ENCODE measurements at regions of chr2 and their contacts with region 1.

Region 1: GRCh38 chr2:128232965-128233789 is 85.5 kb downstream of the HS6ST1 start:
- DNase-seq: peak; percentile 69 to 91 (median 83)
- ATAC-seq: peak; percentile 97
- H3K4me3 ChIP-seq: peak overlapping the region; percentile 61 to 77
- H3K4me3 Mint-ChIP-seq: peak overlapping the region; percentile 91
- H3K27ac ChIP-seq: peak overlapping the region in 1 of 2 experiments; percentile 42
- H3K27ac Mint-ChIP-seq: peak overlapping the region; percentile 69
- H3K4me1 ChIP-seq: peaks cover 10% of the 10 kb centered on the region
- H3K4me1 Mint-ChIP-seq: peaks cover 3% of the 10 kb centered on the region
- H3K27me3 ChIP-seq: peaks cover 0 to 8% of the 10 kb centered on the region in 2 experiments
- H3K27me3 Mint-ChIP-seq: peaks cover 6% of the 10 kb centered on the region
- CTCF ChIP-seq: peak; percentile 88

Region 2: GRCh38 chr2:127884436-127885345 is 348.5 kb before region 1 on chr2:
- CTCF ChIA-PET with region 1: no interaction called
- POLR2A ChIA-PET with region 1: no interaction called
- intact Hi-C with region 1: loop called (anchors 5 kb)
- DNase-seq: peak in 1 of 9 experiments; percentile 9
- ATAC-seq: no peak
- H3K4me3 ChIP-seq: peak overlapping the region; percentile 38
- H3K4me3 Mint-ChIP-seq: peak overlapping the region; percentile 86
- H3K27ac ChIP-seq: no peak overlapping the region
- H3K27ac Mint-ChIP-seq: peak overlapping the region; percentile 87
- H3K4me1 ChIP-seq: peaks cover 22% of the 10 kb centered on the region
- H3K4me1 Mint-ChIP-seq: peaks cover 66% of the 10 kb centered on the region
- H3K27me3 ChIP-seq: no peaks in the 10 kb centered on the region
- H3K27me3 Mint-ChIP-seq: no peaks in the 10 kb centered on the region
- CTCF ChIP-seq: no peak

Region 3: GRCh38 chr2:128062571-128062970 is 170.6 kb before region 1 on chr2:
- CTCF ChIA-PET with region 1: interaction called, 10 read pairs
- POLR2A ChIA-PET with region 1: no interaction called
- intact Hi-C with region 1: loop called (anchors 1 to 10 kb)
- DNase-seq: no peak
- ATAC-seq: no peak
- H3K4me3 ChIP-seq: no peak overlapping the region
- H3K4me3 Mint-ChIP-seq: no peak overlapping the region
- H3K27ac ChIP-seq: no peak overlapping the region
- H3K27ac Mint-ChIP-seq: no peak overlapping the region
- H3K4me1 ChIP-seq: no peaks in the 10 kb centered on the region
- H3K4me1 Mint-ChIP-seq: no peaks in the 10 kb centered on the region
- H3K27me3 ChIP-seq: no peaks in the 10 kb centered on the region
- H3K27me3 Mint-ChIP-seq: peaks cover 2% of the 10 kb centered on the region
- CTCF ChIP-seq: no peak

Region 4: DNA sequence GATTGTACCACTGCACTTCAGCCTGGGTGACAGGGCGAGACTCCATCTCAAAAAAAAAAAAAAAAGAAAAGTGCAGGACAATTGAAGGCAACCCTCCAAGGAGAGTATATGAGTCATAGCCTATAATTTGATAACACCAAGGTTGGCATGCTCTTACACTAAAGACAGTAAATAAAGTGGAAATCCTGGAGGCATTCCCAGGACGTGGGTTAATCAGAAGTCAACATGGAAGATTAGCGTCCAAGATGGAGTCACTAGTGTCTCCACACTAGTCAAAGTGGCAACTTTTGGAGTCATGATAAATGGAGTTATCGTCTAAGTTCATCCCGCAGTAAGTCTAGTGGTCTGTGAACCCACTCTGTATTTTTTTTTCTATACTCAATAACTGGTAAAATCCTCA is 163.4 kb before region 1 on chr2:
- CTCF ChIA-PET with region 1: no interaction called
- POLR2A ChIA-PET with region 1: no interaction called
- intact Hi-C with region 1: loop called in 1 of 2 experiments (anchors 10 kb)
- DNase-seq: no peak
- ATAC-seq: no peak
- H3K4me3 ChIP-seq: no peak overlapping the region
- H3K4me3 Mint-ChIP-seq: no peak overlapping the region
- H3K27ac ChIP-seq: no peak overlapping the region
- H3K27ac Mint-ChIP-seq: no peak overlapping the region
- H3K4me1 ChIP-seq: no peaks in the 10 kb centered on the region
- H3K4me1 Mint-ChIP-seq: no peaks in the 10 kb centered on the region
- H3K27me3 ChIP-seq: no peaks in the 10 kb centered on the region
- H3K27me3 Mint-ChIP-seq: no peaks in the 10 kb centered on the region
- CTCF ChIP-seq: no peak

Region 5: GRCh38 chr2:128178650-128179460 is 54.3 kb before region 1 on chr2:
- CTCF ChIA-PET with region 1: interaction called, 7 read pairs
- POLR2A ChIA-PET with region 1: no interaction called
- intact Hi-C with region 1: loop called (anchors 1 kb)
- DNase-seq: peak in 6 of 9 experiments; percentile 7 to 69 (median 46)
- ATAC-seq: peak; percentile 48
- H3K4me3 ChIP-seq: no peak overlapping the region
- H3K4me3 Mint-ChIP-seq: no peak overlapping the region
- H3K27ac ChIP-seq: no peak overlapping the region
- H3K27ac Mint-ChIP-seq: no peak overlapping the region
- H3K4me1 ChIP-seq: no peaks in the 10 kb centered on the region
- H3K4me1 Mint-ChIP-seq: no peaks in the 10 kb centered on the region
- H3K27me3 ChIP-seq: no peaks in the 10 kb centered on the region
- H3K27me3 Mint-ChIP-seq: no peaks in the 10 kb centered on the region
- CTCF ChIP-seq: peak; percentile 27

Region 6: GRCh38 chr2:128250229-128251025 is 17.2 kb after region 1 on chr2:
- CTCF ChIA-PET with region 1: no interaction called
- POLR2A ChIA-PET with region 1: no interaction called
- intact Hi-C with region 1: no loop called
- DNase-seq: no peak
- ATAC-seq: no peak
- H3K4me3 ChIP-seq: no peak overlapping the region
- H3K4me3 Mint-ChIP-seq: no peak overlapping the region
- H3K27ac ChIP-seq: no peak overlapping the region
- H3K27ac Mint-ChIP-seq: no peak overlapping the region
- H3K4me1 ChIP-seq: no peaks in the 10 kb centered on the region
- H3K4me1 Mint-ChIP-seq: no peaks in the 10 kb centered on the region
- H3K27me3 ChIP-seq: no peaks in the 10 kb centered on the region
- H3K27me3 Mint-ChIP-seq: peaks cover 5% of the 10 kb centered on the region
- CTCF ChIP-seq: no peak